T-cell (primary cell): ENCODE measurements at regions of chr11 and their contacts with region 1.

Region 1: GRCh38 chr11:67630228-67630942 is 648 bp upstream of the NUDT8 start:
- DNase-seq: peak in 34 of 35 experiments; percentile 73 to 96 (median 88)
- ATAC-seq: peak; percentile 69 to 79 (median 74)
- H3K4me3 ChIP-seq: peak overlapping the region; percentile 66 to 93
- H3K4me3 Mint-ChIP-seq: peak overlapping the region; percentile 82 to 90 (median 88)
- H3K27ac ChIP-seq: peak overlapping the region; percentile 89
- H3K27ac Mint-ChIP-seq: peak overlapping the region; percentile 87 to 93
- H3K4me1 ChIP-seq: peaks cover 0 to 24% of the 10 kb centered on the region in 2 experiments
- H3K4me1 Mint-ChIP-seq: peaks cover 6 to 8% (median 7%) of the 10 kb centered on the region in 3 donors
- H3K27me3 ChIP-seq: peaks cover 0 to 16% of the 10 kb centered on the region in 2 experiments
- H3K27me3 Mint-ChIP-seq: no peaks in the 10 kb centered on the region

Region 2: DNA sequence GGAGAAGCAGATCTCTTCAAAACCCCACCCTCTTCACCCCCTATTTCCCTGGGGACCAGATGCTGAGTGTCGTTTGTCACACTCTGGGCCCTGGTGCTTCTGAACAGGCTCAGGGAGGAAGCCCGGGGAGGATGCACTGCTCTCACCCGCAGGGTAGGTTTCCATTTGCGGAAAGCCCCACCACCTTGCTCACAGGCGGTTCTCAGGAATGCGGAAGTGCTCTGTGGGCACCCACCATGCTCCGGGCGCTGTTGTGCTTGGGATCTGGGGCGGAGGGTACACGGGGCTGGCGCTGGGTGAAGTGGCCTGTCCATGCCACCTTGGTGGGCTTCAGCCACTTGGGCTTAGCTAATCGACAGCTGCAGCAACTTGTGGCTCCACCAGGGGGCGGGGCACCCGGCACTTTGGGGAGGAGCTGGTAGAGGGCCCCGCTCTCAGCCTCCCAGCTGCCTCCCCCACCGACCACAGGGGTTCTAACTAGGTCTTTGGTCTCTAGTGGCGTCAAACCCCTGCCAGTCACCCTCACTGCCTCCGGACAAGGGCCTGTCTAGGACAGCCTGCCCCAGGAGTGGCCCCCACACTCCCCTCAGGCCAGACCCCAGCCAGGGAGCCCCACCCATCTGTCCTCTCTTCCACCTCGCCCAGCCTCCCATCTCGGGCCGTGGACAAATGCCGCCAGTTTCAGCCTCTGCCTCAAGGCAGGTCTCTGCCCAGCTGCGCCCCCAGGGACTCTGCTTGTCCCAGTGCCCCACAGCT is 16.2 kb before region 1 on chr11:
- CTCF ChIA-PET with region 1: interaction called in 1 of 2 experiments, 17 read pairs
- POLR2A ChIA-PET with region 1: no interaction called
- DNase-seq: peak; percentile 68 to 93 (median 84)
- ATAC-seq: peak; percentile 91 to 96 (median 94)
- H3K4me3 ChIP-seq: peak overlapping the region in 1 of 2 donors; percentile 64
- H3K4me3 Mint-ChIP-seq: peak overlapping the region; percentile 74 to 83 (median 76)
- H3K27ac ChIP-seq: peak overlapping the region; percentile 100
- H3K27ac Mint-ChIP-seq: peak overlapping the region; percentile 96 to 97
- H3K4me1 ChIP-seq: peaks cover 15 to 44% of the 10 kb centered on the region in 2 experiments
- H3K4me1 Mint-ChIP-seq: peaks cover 15 to 39% (median 23%) of the 10 kb centered on the region in 3 donors
- H3K27me3 ChIP-seq: peaks cover 0 to 9% of the 10 kb centered on the region in 2 experiments
- H3K27me3 Mint-ChIP-seq: no peaks in the 10 kb centered on the region

Region 3: GRCh38 chr11:67658691-67659271 is 28.4 kb after region 1 on chr11:
- CTCF ChIA-PET with region 1: interaction called in 1 of 2 experiments, 18 read pairs
- POLR2A ChIA-PET with region 1: interaction called in 1 of 2 experiments, 3 read pairs
- DNase-seq: no peak
- ATAC-seq: no peak
- H3K4me3 ChIP-seq: no peak overlapping the region
- H3K4me3 Mint-ChIP-seq: no peak overlapping the region
- H3K27ac ChIP-seq: no peak overlapping the region
- H3K27ac Mint-ChIP-seq: no peak overlapping the region
- H3K4me1 ChIP-seq: peaks cover 0 to 4% of the 10 kb centered on the region in 2 experiments
- H3K4me1 Mint-ChIP-seq: peaks cover 0 to 11% (median 1%) of the 10 kb centered on the region in 3 donors
- H3K27me3 ChIP-seq: peaks cover 0 to 5% of the 10 kb centered on the region in 2 experiments
- H3K27me3 Mint-ChIP-seq: no peaks in the 10 kb centered on the region